H1 (cell line): ENCODE measurements at regions of chr6 and their contacts with region 1.

Region 1: GRCh38 chr6:76861403-76861802 is 601.9 kb downstream of the HTR1B start:
- DNase-seq: peak in 1 of 2 experiments; percentile 58
- H3K4me3 ChIP-seq: no peak overlapping the region
- H3K27ac ChIP-seq: no peak overlapping the region
- H3K4me1 ChIP-seq: 0 out of 7 replicates have a peak, but pooled peaks cover 0 to 2% (median 0%) of the 10 kb centered on the region in 4 experiments
- H3K27me3 ChIP-seq: no peaks in the 10 kb centered on the region
- CTCF ChIP-seq: peak in 2 of 3 experiments; percentile 50 to 64; a peak in 3 of 4 replicates
- EP300 ChIP-seq: no peak
- POLR2A ChIP-seq: no peak
- RAD21 ChIP-seq: peak; percentile 56 to 66

Region 2: DNA sequence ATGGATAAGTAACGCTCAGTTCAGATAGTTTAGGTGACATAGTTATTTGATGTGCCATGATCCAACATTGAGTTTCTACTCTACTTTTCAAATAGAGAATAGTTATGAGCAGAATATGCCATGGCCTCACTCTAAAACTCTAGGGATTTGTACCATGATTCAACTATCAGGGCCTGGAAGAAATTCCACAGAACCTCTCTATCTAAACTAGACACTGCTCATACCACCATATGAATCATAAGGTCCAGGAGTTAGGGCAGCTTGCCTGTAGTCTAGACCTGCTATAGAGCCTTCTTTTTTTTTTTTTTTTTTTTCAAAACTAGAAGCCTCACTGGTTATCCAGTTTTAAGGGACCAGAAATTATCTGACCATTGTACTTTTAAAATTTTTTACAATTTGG is 217.2 kb before region 1 on chr6:
- CTCF ChIA-PET with region 1: no interaction called
- POLR2A ChIA-PET with region 1: no interaction called
- DNase-seq: no peak
- H3K4me3 ChIP-seq: no peak overlapping the region
- H3K27ac ChIP-seq: no peak overlapping the region
- H3K4me1 ChIP-seq: no peaks in the 10 kb centered on the region
- H3K27me3 ChIP-seq: no peaks in the 10 kb centered on the region
- CTCF ChIP-seq: no peak
- EP300 ChIP-seq: no peak
- POLR2A ChIP-seq: no peak
- RAD21 ChIP-seq: no peak

Region 3: DNA sequence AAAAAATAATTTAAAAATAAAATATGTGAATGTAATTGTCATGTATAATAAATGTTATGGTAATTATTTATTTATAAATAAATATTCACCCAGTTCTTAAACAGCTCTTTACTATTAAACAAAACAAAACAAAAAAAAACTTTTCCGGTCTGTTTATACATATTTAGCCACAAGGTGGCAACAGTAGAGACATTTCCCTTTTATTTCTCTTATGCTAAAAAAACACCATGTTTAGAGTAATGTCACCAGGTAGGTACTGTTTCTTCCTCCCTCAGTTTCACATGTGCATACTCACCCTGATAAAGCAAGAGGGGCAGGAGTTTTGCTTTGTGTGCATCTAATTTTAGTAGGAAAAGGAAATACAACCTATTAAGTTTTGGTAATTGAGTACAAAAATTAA is 178.6 kb before region 1 on chr6:
- CTCF ChIA-PET with region 1: interaction called, 13 read pairs
- POLR2A ChIA-PET with region 1: interaction called, 3 read pairs
- DNase-seq: no peak
- H3K4me3 ChIP-seq: no peak overlapping the region
- H3K27ac ChIP-seq: no peak overlapping the region
- H3K4me1 ChIP-seq: peaks cover 2 to 16% (median 12%) of the 10 kb centered on the region in 4 experiments; a peak in 5 of 7 replicates
- H3K27me3 ChIP-seq: no peaks in the 10 kb centered on the region
- CTCF ChIP-seq: peak in 2 of 3 experiments; percentile 22 to 24; a peak in 2 of 4 replicates
- EP300 ChIP-seq: no peak
- POLR2A ChIP-seq: no peak
- RAD21 ChIP-seq: peak in 1 of 2 experiments; percentile 18; a peak in 2 of 4 replicates

Region 4: DNA sequence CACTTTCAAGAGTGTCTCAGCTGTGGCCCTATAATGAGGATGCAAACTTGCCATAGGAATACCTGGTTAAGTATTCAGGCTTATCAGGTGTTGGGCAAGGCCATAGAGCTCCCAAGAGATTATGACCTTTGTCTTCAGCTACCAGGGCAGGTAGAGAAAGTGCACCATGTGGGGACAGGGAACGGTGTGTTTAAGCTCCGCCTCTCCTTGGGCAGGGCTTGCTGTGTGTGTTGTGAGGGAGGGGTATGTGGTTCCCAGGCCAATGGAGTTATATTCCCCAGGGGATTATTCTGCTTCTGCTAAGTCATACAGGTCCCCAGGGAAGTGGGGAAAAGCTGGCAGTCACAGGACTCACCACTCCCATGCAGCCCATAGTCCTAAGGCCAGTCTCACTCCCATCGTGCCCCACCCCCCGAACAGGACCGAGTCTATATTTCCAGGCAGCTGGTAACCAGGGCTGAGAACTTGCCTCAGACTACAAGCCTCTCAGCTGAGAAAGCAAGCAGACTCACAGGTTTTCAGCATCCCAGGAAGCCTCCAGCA is 58.3 kb before region 1 on chr6:
- CTCF ChIA-PET with region 1: no interaction called
- POLR2A ChIA-PET with region 1: no interaction called
- DNase-seq: no peak
- H3K4me3 ChIP-seq: no peak overlapping the region
- H3K27ac ChIP-seq: no peak overlapping the region
- H3K4me1 ChIP-seq: no peaks in the 10 kb centered on the region
- H3K27me3 ChIP-seq: no peaks in the 10 kb centered on the region
- CTCF ChIP-seq: no peak
- EP300 ChIP-seq: no peak
- POLR2A ChIP-seq: no peak
- RAD21 ChIP-seq: no peak

Region 5: GRCh38 chr6:76877238-76877553 is 15.8 kb after region 1 on chr6:
- CTCF ChIA-PET with region 1: interaction called, 10 read pairs
- POLR2A ChIA-PET with region 1: interaction called, 3 read pairs
- DNase-seq: no peak
- H3K4me3 ChIP-seq: peak overlapping the region in 1 of 4 experiments; percentile 53; a peak in 2 of 8 replicates
- H3K27ac ChIP-seq: no peak overlapping the region
- H3K4me1 ChIP-seq: no peaks in the 10 kb centered on the region
- H3K27me3 ChIP-seq: no peaks in the 10 kb centered on the region
- CTCF ChIP-seq: no peak
- EP300 ChIP-seq: no peak
- POLR2A ChIP-seq: no peak
- RAD21 ChIP-seq: no peak

Region 6: GRCh38 chr6:77072694-77073409 is 211.4 kb after region 1 on chr6:
- CTCF ChIA-PET with region 1: no interaction called
- POLR2A ChIA-PET with region 1: no interaction called
- DNase-seq: no peak
- H3K4me3 ChIP-seq: no peak overlapping the region
- H3K27ac ChIP-seq: no peak overlapping the region
- H3K4me1 ChIP-seq: peaks cover 0 to 2% (median 0%) of the 10 kb centered on the region in 4 experiments; a peak in 2 of 7 replicates
- H3K27me3 ChIP-seq: no peaks in the 10 kb centered on the region
- CTCF ChIP-seq: no peak
- EP300 ChIP-seq: no peak
- POLR2A ChIP-seq: no peak
- RAD21 ChIP-seq: no peak